ENCODE measurements at regions of chr21 and their contacts with region 1.

Region 1: DNA sequence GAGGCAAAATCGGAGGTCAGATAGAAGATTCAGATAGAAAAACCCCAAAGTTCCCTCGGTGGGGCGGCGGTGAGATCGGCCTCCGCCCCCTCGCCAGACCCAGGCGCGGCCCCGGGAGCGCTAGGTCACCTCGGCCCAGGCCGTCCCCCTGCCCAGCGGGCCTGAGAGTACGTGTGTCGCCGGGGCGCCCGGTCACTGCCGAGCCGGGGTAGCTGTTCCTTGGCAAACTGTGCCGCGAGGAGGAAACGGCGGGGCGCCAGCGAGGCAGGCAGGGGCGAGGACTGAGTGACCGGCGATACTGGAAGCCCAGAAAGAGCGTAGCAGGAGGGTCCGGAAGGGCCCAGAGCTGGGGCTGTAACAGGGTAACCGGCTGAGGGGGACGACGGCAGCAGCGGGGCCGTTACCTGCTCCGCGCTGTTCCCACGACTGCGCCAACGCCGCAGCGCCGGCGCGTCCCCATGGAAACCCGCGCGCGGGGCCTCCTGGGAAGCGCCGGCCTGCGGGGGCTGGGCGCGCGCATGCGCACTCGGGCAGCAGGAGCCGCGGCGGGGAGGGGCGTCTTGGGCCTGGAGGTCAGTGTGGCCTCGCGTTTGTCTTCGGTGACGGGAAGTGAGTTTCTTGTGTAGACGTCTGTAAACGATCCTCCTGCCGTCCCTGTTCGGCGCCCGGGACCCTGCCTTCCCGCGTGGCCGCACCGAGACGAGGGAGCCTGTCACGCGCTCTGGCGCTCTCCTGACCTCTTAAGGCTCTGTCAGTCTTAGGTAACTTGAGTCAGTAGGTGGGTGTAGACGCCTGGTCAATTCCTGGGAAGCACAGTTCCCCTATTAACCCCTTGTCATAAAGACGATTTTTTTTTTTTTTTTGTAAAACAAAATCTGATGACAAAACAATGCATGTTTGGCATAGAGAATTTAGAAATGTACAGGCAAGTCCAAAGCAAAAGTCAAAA is at the start of gene LCA5L:
- DNase-seq: peak; percentile 93 to 96
- H3K4me3 ChIP-seq: peak within 1 kb of the TSS; percentile 73
- H3K4me3 Mint-ChIP-seq: peak within 1 kb of the TSS; percentile 98
- H3K27ac Mint-ChIP-seq: peak within 1 kb of the TSS; percentile 94
- H3K4me1 ChIP-seq: peaks cover 7% of the 10 kb centered on the region
- H3K4me1 Mint-ChIP-seq: peaks cover 8% of the 10 kb centered on the region
- H3K27me3 ChIP-seq: no peaks in the 10 kb centered on the region
- H3K27me3 Mint-ChIP-seq: peaks cover 6% of the 10 kb centered on the region
- CTCF ChIP-seq: no peak
- total RNA-seq, gene LCA5L: 0.44 and 0.61 TPM in 2 replicates

Region 2: DNA sequence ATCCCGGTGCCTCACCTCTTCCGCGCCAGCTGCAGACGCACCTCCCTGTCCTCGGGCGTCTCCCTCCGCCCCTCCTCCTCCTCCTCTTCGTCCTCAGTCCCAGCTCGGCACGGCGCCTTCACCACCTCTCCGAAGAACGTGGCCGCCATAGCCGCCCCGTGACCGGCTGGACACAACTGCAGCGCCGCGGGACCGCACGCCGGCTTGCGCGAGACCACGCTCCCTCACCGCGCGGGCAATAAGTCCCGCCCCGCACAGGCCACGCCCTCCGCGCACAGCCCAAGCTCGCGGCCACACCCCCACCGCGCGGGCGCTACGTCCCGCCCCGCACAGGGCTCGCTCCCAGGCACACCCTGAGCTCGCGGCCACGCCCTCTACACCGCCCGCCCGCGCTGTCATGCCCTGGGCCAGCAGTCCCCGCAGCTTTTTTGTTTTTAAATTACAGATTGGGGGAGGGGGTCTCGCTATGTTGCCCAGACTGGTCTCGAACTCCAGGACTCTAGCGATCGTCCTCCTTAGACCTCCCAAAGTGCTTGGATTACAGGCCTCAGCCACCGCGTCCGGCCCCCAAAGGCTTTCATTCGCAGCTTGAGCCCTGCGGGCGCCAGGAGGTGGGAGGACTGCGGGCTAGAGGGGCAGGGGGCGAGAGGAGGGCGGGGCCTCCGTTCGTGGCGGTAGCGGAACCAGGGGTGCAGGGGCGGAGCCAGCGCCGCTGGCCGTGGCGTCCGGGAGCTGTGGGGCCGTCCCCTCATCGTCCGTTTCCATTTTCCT is 262.2 kb before region 1 on chr21 and contains the start of gene PSMG1:
- CTCF ChIA-PET with region 1: no interaction called
- POLR2A ChIA-PET with region 1: no interaction called
- intact Hi-C with region 1: loop called (anchors 10 kb)
- DNase-seq: peak; percentile 94 to 95
- H3K4me3 ChIP-seq: peak within 1 kb of the TSS; percentile 99
- H3K4me3 Mint-ChIP-seq: peak within 1 kb of the TSS; percentile 93
- H3K27ac Mint-ChIP-seq: peak within 1 kb of the TSS; percentile 97
- H3K4me1 ChIP-seq: 0 out of 2 replicates have a peak, but pooled peaks cover 6% of the 10 kb centered on the region
- H3K4me1 Mint-ChIP-seq: no peaks in the 10 kb centered on the region
- H3K27me3 ChIP-seq: no peaks in the 10 kb centered on the region
- H3K27me3 Mint-ChIP-seq: no peaks in the 10 kb centered on the region
- CTCF ChIP-seq: no peak
- total RNA-seq, gene PSMG1: 86.2 and 95.3 TPM in 2 replicates

Region 3: DNA sequence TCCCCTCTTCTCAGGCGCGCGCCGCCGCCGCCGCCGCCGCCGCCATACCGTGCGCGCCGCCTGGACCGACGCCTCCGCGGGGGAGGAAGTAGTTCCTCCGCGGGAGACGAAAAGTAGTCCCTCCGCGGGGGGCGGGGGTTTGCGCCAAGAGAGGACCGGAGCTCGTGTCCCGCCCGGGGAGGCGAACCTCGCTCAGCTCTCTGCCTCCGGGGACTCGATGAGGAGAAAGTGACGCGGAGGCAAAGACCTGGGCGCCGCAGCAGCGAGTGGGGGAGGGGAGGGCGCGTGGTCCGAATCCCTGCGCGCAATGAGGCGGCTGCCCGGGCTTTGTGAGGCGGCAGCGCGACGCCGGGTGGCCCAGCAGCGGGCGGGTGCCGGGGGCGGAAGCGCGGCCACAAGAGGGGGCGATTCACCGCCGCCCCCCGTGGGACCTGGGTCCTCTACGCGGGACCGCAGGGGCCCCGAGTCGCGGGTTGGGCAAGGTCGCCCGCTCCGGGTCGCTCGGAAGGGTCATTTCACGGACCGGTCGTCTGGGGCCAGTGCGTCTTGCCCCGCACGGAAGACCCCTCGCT is 131.9 kb before region 1 on chr21 and contains the start of gene BRWD1:
- CTCF ChIA-PET with region 1: no interaction called
- POLR2A ChIA-PET with region 1: no interaction called
- intact Hi-C with region 1: loop called (anchors 10 kb)
- DNase-seq: peak; percentile 90 to 92
- H3K4me3 ChIP-seq: peak within 1 kb of the TSS; percentile 86
- H3K4me3 Mint-ChIP-seq: peak within 1 kb of the TSS; percentile 97
- H3K27ac Mint-ChIP-seq: peak within 1 kb of the TSS; percentile 89
- H3K4me1 ChIP-seq: peaks cover 26% of the 10 kb centered on the region
- H3K4me1 Mint-ChIP-seq: peaks cover 21% of the 10 kb centered on the region
- H3K27me3 ChIP-seq: no peaks in the 10 kb centered on the region
- H3K27me3 Mint-ChIP-seq: no peaks in the 10 kb centered on the region
- CTCF ChIP-seq: peak; percentile 28 to 29
- total RNA-seq, gene BRWD1: 37.1 and 42.2 TPM in 2 replicates

Region 4: DNA sequence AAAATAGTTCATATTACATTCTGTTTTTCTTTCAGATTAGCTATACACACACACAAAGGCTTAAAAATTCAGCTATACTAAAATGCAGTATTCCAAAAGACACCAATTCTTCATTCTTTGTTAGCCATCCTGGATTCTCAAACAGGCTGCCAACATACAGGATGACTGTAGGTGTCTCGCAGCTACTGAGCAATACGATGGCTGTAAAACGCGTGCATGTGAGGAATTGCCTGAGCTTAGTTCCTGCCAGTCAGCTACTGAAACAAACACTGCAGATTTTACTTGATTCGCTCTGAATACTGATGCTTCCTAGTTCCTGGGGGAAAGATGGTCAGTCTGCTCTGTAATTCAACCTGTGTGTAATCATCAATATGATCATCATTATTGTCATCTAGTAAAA is 72.0 kb before region 1 on chr21:
- CTCF ChIA-PET with region 1: interaction called, 8 read pairs
- POLR2A ChIA-PET with region 1: no interaction called
- intact Hi-C with region 1: loop called (anchors 2 kb)
- DNase-seq: peak; percentile 56
- H3K4me3 ChIP-seq: no peak overlapping the region
- H3K4me3 Mint-ChIP-seq: peak overlapping the region; percentile 38
- H3K27ac Mint-ChIP-seq: no peak overlapping the region
- H3K4me1 ChIP-seq: no peaks in the 10 kb centered on the region
- H3K4me1 Mint-ChIP-seq: peaks cover 6% of the 10 kb centered on the region
- H3K27me3 ChIP-seq: no peaks in the 10 kb centered on the region
- H3K27me3 Mint-ChIP-seq: no peaks in the 10 kb centered on the region
- CTCF ChIP-seq: peak in 1 of 2 experiments; percentile 66

Region 5: GRCh38 chr21:39397646-39398385 is 47.8 kb before region 1 on chr21:
- CTCF ChIA-PET with region 1: interaction called, 3 read pairs
- POLR2A ChIA-PET with region 1: no interaction called
- intact Hi-C with region 1: loop called (anchors 1 kb)
- DNase-seq: no peak
- H3K4me3 ChIP-seq: no peak overlapping the region
- H3K4me3 Mint-ChIP-seq: no peak overlapping the region
- H3K27ac Mint-ChIP-seq: no peak overlapping the region
- H3K4me1 ChIP-seq: no peaks in the 10 kb centered on the region
- H3K4me1 Mint-ChIP-seq: no peaks in the 10 kb centered on the region
- H3K27me3 ChIP-seq: no peaks in the 10 kb centered on the region
- H3K27me3 Mint-ChIP-seq: no peaks in the 10 kb centered on the region
- CTCF ChIP-seq: no peak

Region 6: GRCh38 chr21:39555911-39556590 is 110.5 kb after region 1 on chr21:
- CTCF ChIA-PET with region 1: no interaction called
- POLR2A ChIA-PET with region 1: no interaction called
- intact Hi-C with region 1: no loop called
- DNase-seq: no peak
- H3K4me3 ChIP-seq: no peak overlapping the region
- H3K4me3 Mint-ChIP-seq: no peak overlapping the region
- H3K27ac Mint-ChIP-seq: no peak overlapping the region
- H3K4me1 ChIP-seq: no peaks in the 10 kb centered on the region
- H3K4me1 Mint-ChIP-seq: no peaks in the 10 kb centered on the region
- H3K27me3 ChIP-seq: no peaks in the 10 kb centered on the region
- H3K27me3 Mint-ChIP-seq: peaks cover 4% of the 10 kb centered on the region
- CTCF ChIP-seq: no peak